Heart right ventricle (tissue), 16 donors: ENCODE measurements at regions of chr10 and their contacts with region 1.

Region 1: DNA sequence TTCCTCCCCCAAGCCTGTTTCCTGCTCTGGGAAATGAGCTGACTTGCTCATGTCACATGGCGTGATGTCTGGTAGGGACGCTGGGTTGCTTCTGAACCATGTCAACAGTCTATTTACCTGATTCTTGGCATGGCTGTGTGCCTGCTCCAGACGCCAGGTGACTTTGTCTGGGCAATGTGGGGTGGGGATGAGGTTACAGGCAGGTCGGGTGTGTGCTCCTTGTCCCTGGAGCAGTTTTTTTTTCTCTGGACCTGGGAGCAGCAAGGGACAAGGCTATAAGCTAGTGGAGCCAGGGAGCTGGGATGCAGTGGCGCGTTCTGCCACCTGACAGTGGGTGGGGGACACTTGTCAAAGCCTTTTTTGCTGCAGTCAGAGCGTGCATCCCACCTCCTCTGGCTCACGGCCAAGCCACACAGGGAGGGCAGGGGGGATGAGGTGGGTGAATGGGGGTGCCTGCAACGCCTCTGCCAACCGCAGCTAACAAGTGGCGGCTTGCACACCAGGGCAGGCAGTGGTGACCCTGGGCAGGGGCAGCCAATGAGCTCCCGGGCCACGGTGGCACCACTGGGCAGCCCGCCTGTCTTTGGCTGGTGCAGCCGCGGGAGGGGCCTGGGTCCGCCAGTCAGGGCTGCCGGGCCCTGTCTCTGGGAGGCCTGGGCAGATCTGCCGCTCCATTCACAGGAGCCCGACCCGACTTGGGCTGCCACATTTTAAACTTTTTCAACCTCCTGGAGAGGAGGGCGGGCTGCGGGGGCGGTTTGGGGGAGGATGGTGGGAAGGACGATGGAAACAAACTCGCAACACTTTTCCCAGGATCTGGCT is 22.9 kb downstream of the DNAJB12 start:
- DNase-seq: peak; percentile 82 to 83
- ATAC-seq: peak; percentile 48 to 78 (median 61)
- H3K4me3 ChIP-seq: peak overlapping the region in 3 of 10 donors; percentile 5 to 10 (median 9)
- H3K27ac ChIP-seq: peak overlapping the region; percentile 53 to 97 (median 88)
- H3K4me1 ChIP-seq: peaks cover 52 to 99% (median 86%) of the 10 kb centered on the region in 9 donors
- H3K27me3 ChIP-seq: no peaks in the 10 kb centered on the region
- CTCF ChIP-seq: peak in 5 of 9 donors; percentile 15 to 45 (median 29)

Region 2: GRCh38 chr10:71899665-71900412 is 432.0 kb before region 1 on chr10:
- intact Hi-C with region 1: loop called in 2 of 10 experiments (anchors 5 kb)
- DNase-seq: no peak
- ATAC-seq: peak in 1 of 8 donors; percentile 7
- H3K4me3 ChIP-seq: no peak overlapping the region
- H3K27ac ChIP-seq: no peak overlapping the region
- H3K4me1 ChIP-seq: peaks cover 0 to 14% (median 10%) of the 10 kb centered on the region in 9 donors
- H3K27me3 ChIP-seq: no peaks in the 10 kb centered on the region
- CTCF ChIP-seq: no peak

Region 3: GRCh38 chr10:71963756-71964668 is 367.8 kb before region 1 on chr10 and contains the start of gene CHST3:
- intact Hi-C with region 1: loop called in 6 of 10 experiments (anchors 5 to 10 kb)
- DNase-seq: peak; percentile 85 to 88
- ATAC-seq: peak; percentile 77 to 91 (median 86)
- H3K4me3 ChIP-seq: peak within 1 kb of the TSS; percentile 67 to 95 (median 84)
- H3K27ac ChIP-seq: peak within 1 kb of the TSS; percentile 92 to 100 (median 98)
- H3K4me1 ChIP-seq: peaks cover 11 to 58% (median 44%) of the 10 kb centered on the region in 9 donors
- H3K27me3 ChIP-seq: peaks cover 0 to 28% (median 0%) of the 10 kb centered on the region in 7 donors
- CTCF ChIP-seq: peak in 2 of 9 donors; percentile 3 to 27
- total RNA-seq, gene CHST3: 14.5 to 28.7 (median 21.3) TPM

Region 4: GRCh38 chr10:72058989-72059842 is 272.6 kb before region 1 on chr10:
- intact Hi-C with region 1: loop called in 4 of 10 experiments (anchors 5 to 10 kb)
- DNase-seq: no peak
- ATAC-seq: no peak
- H3K4me3 ChIP-seq: no peak overlapping the region
- H3K27ac ChIP-seq: peak overlapping the region in 1 of 10 donors; percentile 26
- H3K4me1 ChIP-seq: peaks cover 0 to 17% (median 4%) of the 10 kb centered on the region in 9 donors
- H3K27me3 ChIP-seq: no peaks in the 10 kb centered on the region
- CTCF ChIP-seq: no peak

Region 5: DNA sequence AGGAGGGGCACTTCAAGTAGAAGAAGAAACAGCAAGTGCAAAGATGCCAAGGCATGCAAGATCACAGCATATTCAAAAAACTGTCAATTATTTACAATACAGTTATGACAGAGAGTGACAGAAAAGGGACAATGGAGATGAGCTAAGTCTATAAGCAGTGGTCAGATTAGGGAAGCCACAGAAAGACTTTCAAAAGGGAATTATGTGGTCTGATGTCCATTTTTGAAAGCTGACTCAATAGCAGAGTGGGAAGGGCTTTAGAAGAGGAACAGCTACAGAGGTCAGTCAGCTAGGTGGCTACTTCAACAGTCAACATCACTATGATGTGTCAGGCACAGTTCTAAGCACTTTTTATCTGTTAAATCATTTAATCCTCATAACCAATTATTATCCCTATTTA is 198.3 kb before region 1 on chr10:
- intact Hi-C with region 1: loop called in 9 of 10 experiments (anchors 2 to 5 kb)
- DNase-seq: no peak
- ATAC-seq: peak in 5 of 8 donors; percentile 26 to 57 (median 51)
- H3K4me3 ChIP-seq: no peak overlapping the region
- H3K27ac ChIP-seq: no peak overlapping the region
- H3K4me1 ChIP-seq: peaks cover 0 to 24% (median 4%) of the 10 kb centered on the region in 9 donors
- H3K27me3 ChIP-seq: no peaks in the 10 kb centered on the region
- CTCF ChIP-seq: no peak

Region 6: DNA sequence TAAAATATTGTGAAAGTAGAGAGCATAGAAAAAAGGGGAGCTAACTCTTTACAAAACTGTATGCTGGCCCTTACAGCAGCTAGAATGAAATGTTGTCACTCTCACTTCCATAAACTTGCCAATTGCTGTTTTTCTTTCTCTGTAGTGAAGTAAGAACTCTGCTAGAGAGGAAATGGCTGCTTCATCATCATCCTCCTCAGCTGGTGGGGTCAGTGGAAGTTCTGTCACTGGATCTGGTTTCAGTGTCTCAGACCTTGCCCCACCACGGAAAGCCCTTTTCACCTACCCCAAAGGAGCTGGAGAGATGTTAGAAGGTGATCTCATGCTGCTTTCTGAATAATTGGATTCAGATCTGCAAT is 108.1 kb before region 1 on chr10:
- intact Hi-C with region 1: loop called in 5 of 10 experiments (anchors 5 to 10 kb)
- DNase-seq: no peak
- ATAC-seq: peak in 3 of 8 donors; percentile 37 to 49 (median 48)
- H3K4me3 ChIP-seq: no peak overlapping the region
- H3K27ac ChIP-seq: peak overlapping the region in 9 of 10 donors; percentile 9 to 86 (median 59)
- H3K4me1 ChIP-seq: peaks cover 0 to 51% (median 34%) of the 10 kb centered on the region in 9 donors
- H3K27me3 ChIP-seq: no peaks in the 10 kb centered on the region
- CTCF ChIP-seq: no peak

Region 7: GRCh38 chr10:72254813-72255568 is 76.8 kb before region 1 on chr10:
- intact Hi-C with region 1: loop called in 1 of 10 experiments (anchors 5 kb)
- DNase-seq: peak; percentile 87 to 90
- ATAC-seq: peak; percentile 85 to 94 (median 91)
- H3K4me3 ChIP-seq: peak overlapping the region in 7 of 10 donors; percentile 1 to 28 (median 20)
- H3K27ac ChIP-seq: peak overlapping the region; percentile 84 to 97 (median 90)
- H3K4me1 ChIP-seq: peaks cover 41 to 97% (median 87%) of the 10 kb centered on the region in 9 donors
- H3K27me3 ChIP-seq: no peaks in the 10 kb centered on the region
- CTCF ChIP-seq: peak in 2 of 9 donors; percentile 14 to 36